ENCODE measurements at regions of chr6 and their contacts with region 1.

Region 1: GRCh38 chr6:34602318-34603111 is 46.4 kb upstream of the SPDEF start:
- DNase-seq: peak; percentile 82
- ATAC-seq: peak; percentile 91
- H3K4me3 ChIP-seq: no peak overlapping the region
- H3K27ac ChIP-seq: peak overlapping the region; percentile 8
- H3K4me1 ChIP-seq: peaks cover 54% of the 10 kb centered on the region
- H3K27me3 ChIP-seq: no peaks in the 10 kb centered on the region
- CTCF ChIP-seq: 0 out of 2 replicates have a peak, but pooled peaks have one; percentile 2
- EP300 ChIP-seq: no peak
- POLR2A ChIP-seq: no peak
- RAD21 ChIP-seq: no peak

Region 2: GRCh38 chr6:34526992-34527728 is 75.4 kb before region 1 on chr6:
- CTCF ChIA-PET with region 1: no interaction called
- POLR2A ChIA-PET with region 1: no interaction called
- in situ Hi-C with region 1: loop called (anchors 5 kb)
- intact Hi-C with region 1: no loop called
- DNase-seq: peak; percentile 86
- ATAC-seq: peak; percentile 90
- H3K4me3 ChIP-seq: peak overlapping the region; percentile 37 to 70 (median 42)
- H3K27ac ChIP-seq: no peak overlapping the region
- H3K4me1 ChIP-seq: peaks cover 36% of the 10 kb centered on the region
- H3K27me3 ChIP-seq: peaks cover 10 to 54% of the 10 kb centered on the region in 2 experiments; a peak in 4 of 5 replicates
- CTCF ChIP-seq: peak; percentile 98
- EP300 ChIP-seq: no peak
- POLR2A ChIP-seq: no peak
- RAD21 ChIP-seq: peak; percentile 94

Region 3: GRCh38 chr6:34664256-34664971 is 61.9 kb after region 1 on chr6:
- CTCF ChIA-PET with region 1: no interaction called
- POLR2A ChIA-PET with region 1: no interaction called
- in situ Hi-C with region 1: no loop called
- intact Hi-C with region 1: no loop called
- DNase-seq: peak; percentile 48
- ATAC-seq: no peak
- H3K4me3 ChIP-seq: no peak overlapping the region
- H3K27ac ChIP-seq: peak overlapping the region; percentile 67
- H3K4me1 ChIP-seq: peaks cover 98% of the 10 kb centered on the region
- H3K27me3 ChIP-seq: no peaks in the 10 kb centered on the region
- CTCF ChIP-seq: no peak
- EP300 ChIP-seq: no peak
- POLR2A ChIP-seq: no peak
- RAD21 ChIP-seq: no peak